ENCODE measurements at regions of chr7 and their contacts with region 1.

Region 1: GRCh38 chr7:136405931-136406777 is 429.0 kb upstream of the MTPN start:
- DNase-seq: peak; percentile 67
- H3K4me3 ChIP-seq: no peak overlapping the region
- H3K27ac ChIP-seq: no peak overlapping the region
- H3K4me1 ChIP-seq: peaks cover 0 to 17% (median 8%) of the 10 kb centered on the region in 4 donors
- H3K27me3 ChIP-seq: no peaks in the 10 kb centered on the region
- CTCF ChIP-seq: peak; percentile 59 to 73 (median 62)
- EP300 ChIP-seq: no peak
- POLR2A ChIP-seq: no peak

Region 2: DNA sequence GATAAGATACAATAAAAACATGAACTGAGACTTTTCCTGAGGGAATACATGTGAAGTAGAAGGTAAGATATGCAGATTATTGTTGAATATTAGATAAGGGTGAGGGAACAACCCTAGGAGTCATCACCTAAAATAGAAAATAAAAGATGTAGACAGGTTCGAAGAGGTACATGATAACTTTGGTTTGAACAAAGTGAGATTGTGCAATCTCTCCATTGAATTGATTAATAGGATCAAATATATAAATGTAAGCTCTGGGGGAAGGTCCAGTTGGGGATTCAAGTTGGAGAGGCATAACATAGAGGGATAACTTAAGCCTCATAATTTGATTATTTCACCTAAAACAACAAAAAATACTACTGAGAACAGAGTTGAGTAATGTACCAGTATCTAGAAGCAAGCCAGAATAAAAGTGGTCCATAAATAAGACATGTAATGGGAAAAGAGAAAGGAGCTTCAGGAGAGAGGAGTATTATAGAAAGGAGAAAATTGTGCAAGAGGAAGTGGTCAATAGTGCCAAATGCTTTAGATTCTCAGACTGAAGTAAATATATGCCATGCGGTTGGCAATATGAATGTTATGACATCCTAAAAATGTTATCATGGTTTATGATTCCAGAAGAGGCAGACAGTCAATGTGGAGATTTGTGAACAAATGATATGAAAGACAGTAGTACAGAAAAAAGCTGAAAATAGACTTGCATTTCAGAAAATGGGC is 180.0 kb after region 1 on chr7:
- intact Hi-C with region 1: no loop called
- DNase-seq: no peak
- H3K4me3 ChIP-seq: no peak overlapping the region
- H3K27ac ChIP-seq: no peak overlapping the region
- H3K4me1 ChIP-seq: peaks cover 0 to 16% (median 7%) of the 10 kb centered on the region in 4 donors
- H3K27me3 ChIP-seq: no peaks in the 10 kb centered on the region
- CTCF ChIP-seq: no peak
- EP300 ChIP-seq: no peak
- POLR2A ChIP-seq: no peak

Region 3: GRCh38 chr7:136868496-136869000 is 462.4 kb after region 1 on chr7 and contains the start of gene CHRM2:
- intact Hi-C with region 1: loop called (anchors 2 kb)
- DNase-seq: peak; percentile 64
- H3K4me3 ChIP-seq: peak within 1 kb of the TSS; percentile 77 to 86 (median 82)
- H3K27ac ChIP-seq: peak within 1 kb of the TSS; percentile 46 to 91 (median 90)
- H3K4me1 ChIP-seq: peaks cover 0 to 38% (median 23%) of the 10 kb centered on the region in 4 donors
- H3K27me3 ChIP-seq: no peaks in the 10 kb centered on the region
- CTCF ChIP-seq: no peak
- EP300 ChIP-seq: no peak
- POLR2A ChIP-seq: no peak
- total RNA-seq, gene CHRM2: 94.8 to 121 (median 100) TPM

Region 4: DNA sequence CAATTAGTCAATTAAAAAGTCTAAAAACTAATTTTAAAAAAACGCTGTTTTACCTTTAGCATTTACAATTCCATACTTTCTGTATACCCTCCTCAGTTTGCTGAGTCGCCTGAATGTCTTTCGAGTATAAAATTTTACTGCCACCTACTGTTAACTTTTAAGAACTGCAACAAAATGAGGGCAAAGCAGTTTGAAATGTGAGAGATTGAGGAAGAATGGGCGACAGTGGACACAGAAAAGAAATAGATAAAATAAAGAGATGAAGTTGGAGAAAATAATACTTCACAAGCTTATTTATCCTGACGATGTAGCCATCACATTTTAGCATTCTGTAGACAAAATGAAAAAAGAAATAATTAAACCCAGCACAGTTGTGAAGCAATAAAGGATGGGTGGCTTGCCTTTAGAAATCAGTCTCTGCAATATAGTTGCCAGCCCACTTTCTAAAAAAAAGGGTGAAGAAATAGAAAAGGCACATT is 1048.1 kb after region 1 on chr7:
- intact Hi-C with region 1: loop called (anchors 10 kb)
- DNase-seq: no peak
- H3K4me3 ChIP-seq: peak overlapping the region in 2 of 4 donors; percentile 6 to 11
- H3K27ac ChIP-seq: peak overlapping the region; percentile 53 to 74 (median 70)
- H3K4me1 ChIP-seq: peaks cover 0 to 20% (median 6%) of the 10 kb centered on the region in 4 donors
- H3K27me3 ChIP-seq: no peaks in the 10 kb centered on the region
- CTCF ChIP-seq: peak; percentile 63 to 69 (median 66)
- EP300 ChIP-seq: no peak
- POLR2A ChIP-seq: no peak

Region 5: DNA sequence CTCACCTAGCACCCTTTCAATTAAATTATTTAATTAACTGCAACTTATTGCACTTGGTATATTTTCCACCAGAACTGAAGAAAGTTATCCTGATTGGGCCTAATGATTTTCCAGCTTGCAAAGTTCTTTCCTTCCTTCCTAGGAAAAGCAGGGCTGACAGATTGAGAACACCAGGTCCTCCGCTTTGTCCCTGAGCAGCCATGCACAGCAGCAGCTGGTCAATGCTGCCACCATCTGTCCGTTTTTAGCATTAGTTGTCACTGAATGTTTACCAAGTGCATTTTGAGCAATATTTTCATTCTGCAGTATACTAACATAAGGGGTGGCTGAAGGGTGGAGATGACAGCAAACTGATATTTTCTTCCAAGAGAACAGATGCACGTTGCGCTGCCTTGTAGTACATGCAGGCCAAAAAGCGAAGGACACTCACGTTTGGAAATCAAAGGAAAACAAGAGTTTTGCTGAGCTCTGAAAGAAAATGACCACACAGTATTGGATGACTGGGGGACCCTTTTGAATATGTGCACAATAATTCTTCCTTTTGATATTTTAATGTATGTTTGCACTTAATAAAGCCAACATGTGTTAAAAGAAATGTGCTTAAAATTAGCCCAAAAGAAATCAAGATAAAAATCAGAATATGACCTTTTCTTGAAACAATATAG is 1186.2 kb after region 1 on chr7:
- intact Hi-C with region 1: loop called (anchors 5 kb)
- DNase-seq: peak; percentile 80
- H3K4me3 ChIP-seq: no peak overlapping the region
- H3K27ac ChIP-seq: peak overlapping the region in 3 of 4 donors; percentile 56 to 63 (median 57)
- H3K4me1 ChIP-seq: peaks cover 0 to 36% (median 32%) of the 10 kb centered on the region in 4 donors
- H3K27me3 ChIP-seq: no peaks in the 10 kb centered on the region
- CTCF ChIP-seq: peak; percentile 64 to 83 (median 72)
- EP300 ChIP-seq: no peak
- POLR2A ChIP-seq: no peak

Measured in sigmoid colon (tissue), 7 donors.